ENCODE measurements at regions of chr7 and their contacts with region 1.

Region 1: DNA sequence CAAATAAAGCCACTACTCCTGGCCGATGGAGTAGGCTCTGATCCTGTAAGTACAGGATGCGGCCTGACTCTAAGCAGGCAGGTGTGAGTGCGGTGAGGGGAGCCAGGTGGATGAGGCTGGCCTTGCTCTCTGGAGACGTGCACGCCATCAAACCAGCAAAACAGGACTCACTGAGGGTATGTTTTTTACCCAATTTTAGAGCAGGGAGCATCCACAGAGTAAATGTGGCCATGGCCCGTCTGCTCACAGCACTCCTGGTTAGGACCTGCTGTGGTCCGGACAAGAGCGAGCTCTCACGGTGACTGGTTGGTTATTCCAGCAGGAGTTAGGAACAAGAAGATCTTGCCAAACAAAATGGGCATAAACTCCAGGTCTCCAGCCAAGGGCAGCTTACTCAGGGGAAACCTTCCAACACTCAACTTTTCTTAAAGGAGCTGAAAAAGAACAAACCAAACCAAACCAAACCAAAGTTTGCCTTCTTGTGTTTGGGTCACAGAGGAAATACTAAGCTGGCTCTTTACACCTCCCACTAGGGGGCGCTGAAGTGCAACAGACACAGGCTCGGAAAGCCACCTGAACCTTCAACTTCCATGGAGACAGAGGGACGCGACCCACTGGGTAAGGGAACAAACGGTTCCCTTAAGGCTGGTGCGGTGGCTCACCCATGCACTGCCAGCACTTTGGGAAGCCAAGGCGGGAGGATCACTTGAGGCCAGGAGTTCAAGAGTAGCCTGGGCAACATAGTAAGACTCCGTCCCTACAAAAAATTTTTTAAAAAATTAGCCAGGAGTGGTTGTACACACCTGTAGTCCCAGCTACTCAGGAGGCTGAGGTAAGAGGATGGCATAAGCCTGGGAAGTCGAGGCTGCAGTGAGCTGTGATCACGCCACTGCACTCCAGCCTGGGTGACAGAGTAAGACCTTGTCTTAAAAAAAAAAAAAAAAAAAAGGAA is 122.4 kb downstream of the CLEC2L start:
- DNase-seq: peak; percentile 85
- H3K4me3 ChIP-seq: no peak overlapping the region; a peak in 1 of 4 replicates
- H3K27ac ChIP-seq: no peak overlapping the region
- H3K4me1 ChIP-seq: peaks cover 0 to 5% of the 10 kb centered on the region in 2 experiments; a peak in 1 of 4 replicates
- H3K27me3 ChIP-seq: no peaks in the 10 kb centered on the region
- CTCF ChIP-seq: peak; percentile 99
- EP300 ChIP-seq: no peak
- RAD21 ChIP-seq: peak; percentile 100

Region 2: GRCh38 chr7:139570119-139570518 is 75.7 kb before region 1 on chr7:
- CTCF ChIA-PET with region 1: no interaction called
- POLR2A ChIA-PET with region 1: no interaction called
- DNase-seq: peak; percentile 66
- H3K4me3 ChIP-seq: no peak overlapping the region
- H3K27ac ChIP-seq: no peak overlapping the region
- H3K4me1 ChIP-seq: no peaks in the 10 kb centered on the region
- H3K27me3 ChIP-seq: no peaks in the 10 kb centered on the region
- CTCF ChIP-seq: no peak
- EP300 ChIP-seq: no peak
- RAD21 ChIP-seq: peak; percentile 46

Region 3: GRCh38 chr7:139602143-139602722 is 43.6 kb before region 1 on chr7:
- CTCF ChIA-PET with region 1: interaction called, 22 read pairs
- POLR2A ChIA-PET with region 1: interaction called, 3 read pairs
- DNase-seq: peak; percentile 65
- H3K4me3 ChIP-seq: no peak overlapping the region
- H3K27ac ChIP-seq: no peak overlapping the region
- H3K4me1 ChIP-seq: peaks cover 0 to 18% of the 10 kb centered on the region in 2 experiments; a peak in 1 of 4 replicates
- H3K27me3 ChIP-seq: no peaks in the 10 kb centered on the region
- CTCF ChIP-seq: peak; percentile 86
- EP300 ChIP-seq: no peak
- RAD21 ChIP-seq: peak; percentile 76

Region 4: DNA sequence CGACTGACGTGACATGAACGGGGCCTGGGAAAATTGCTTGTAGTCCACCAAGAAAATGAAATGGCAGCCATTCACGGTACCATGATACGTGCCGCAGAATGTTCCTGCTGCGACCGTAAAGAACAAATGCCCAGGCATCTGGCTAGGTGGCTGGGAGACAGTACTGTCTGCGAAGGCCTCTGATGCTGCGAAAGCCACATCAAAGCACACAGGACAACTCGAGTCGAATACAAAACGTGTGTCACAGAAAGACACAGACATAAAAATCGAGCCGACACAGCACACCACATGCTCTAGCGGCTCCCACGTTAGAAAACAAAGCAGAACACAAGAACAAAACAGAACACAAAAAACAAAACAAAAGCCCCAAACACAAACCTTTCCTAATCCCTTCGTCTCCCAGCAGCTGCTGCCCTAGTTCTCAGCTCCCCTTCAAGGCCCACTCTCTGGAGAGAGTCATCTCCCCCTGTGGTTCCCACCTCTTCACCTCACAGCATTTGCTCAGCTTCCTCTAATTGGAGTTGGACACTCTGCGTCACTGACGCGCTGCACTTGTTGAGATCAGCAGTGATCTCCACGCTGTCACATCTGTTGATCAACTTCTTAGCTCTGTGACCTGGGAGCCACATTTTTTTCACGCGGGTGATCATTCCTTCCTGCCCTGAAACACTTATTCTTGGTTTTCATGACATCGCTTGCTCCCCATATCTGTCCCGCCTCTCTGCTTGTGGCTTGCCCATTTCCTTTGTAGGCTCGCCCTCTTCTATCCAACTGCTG is 10.1 kb before region 1 on chr7:
- CTCF ChIA-PET with region 1: interaction called, 38 read pairs
- POLR2A ChIA-PET with region 1: no interaction called
- DNase-seq: no peak
- H3K4me3 ChIP-seq: no peak overlapping the region
- H3K27ac ChIP-seq: no peak overlapping the region
- H3K4me1 ChIP-seq: no peaks in the 10 kb centered on the region
- H3K27me3 ChIP-seq: no peaks in the 10 kb centered on the region
- CTCF ChIP-seq: no peak
- EP300 ChIP-seq: no peak
- RAD21 ChIP-seq: no peak

Region 5: DNA sequence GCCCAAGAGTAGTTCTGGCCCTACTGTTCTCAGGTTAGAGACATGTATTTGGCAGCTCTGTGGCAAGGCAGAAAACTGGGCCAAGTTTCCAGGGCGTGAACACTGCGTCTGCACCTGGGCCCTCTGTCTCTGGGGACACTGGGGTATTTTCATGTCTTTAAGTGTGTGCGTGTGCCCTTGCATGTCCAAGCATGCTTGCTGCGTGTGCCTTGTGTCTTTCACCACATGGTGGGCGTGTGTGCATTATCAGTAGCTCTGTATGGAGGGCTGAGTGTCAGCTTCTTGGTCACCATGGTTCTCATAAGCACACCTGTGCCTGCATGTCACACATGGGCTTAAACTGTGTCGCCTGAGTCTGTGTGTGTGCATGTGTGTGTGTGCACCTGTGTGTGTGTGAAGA is 62.7 kb after region 1 on chr7:
- CTCF ChIA-PET with region 1: interaction called, 17 read pairs
- POLR2A ChIA-PET with region 1: no interaction called
- DNase-seq: no peak
- H3K4me3 ChIP-seq: no peak overlapping the region
- H3K27ac ChIP-seq: no peak overlapping the region
- H3K4me1 ChIP-seq: peaks cover 6 to 16% of the 10 kb centered on the region in 2 experiments; a peak in 3 of 4 replicates
- H3K27me3 ChIP-seq: no peaks in the 10 kb centered on the region
- CTCF ChIP-seq: no peak
- EP300 ChIP-seq: no peak
- RAD21 ChIP-seq: no peak

Region 6: DNA sequence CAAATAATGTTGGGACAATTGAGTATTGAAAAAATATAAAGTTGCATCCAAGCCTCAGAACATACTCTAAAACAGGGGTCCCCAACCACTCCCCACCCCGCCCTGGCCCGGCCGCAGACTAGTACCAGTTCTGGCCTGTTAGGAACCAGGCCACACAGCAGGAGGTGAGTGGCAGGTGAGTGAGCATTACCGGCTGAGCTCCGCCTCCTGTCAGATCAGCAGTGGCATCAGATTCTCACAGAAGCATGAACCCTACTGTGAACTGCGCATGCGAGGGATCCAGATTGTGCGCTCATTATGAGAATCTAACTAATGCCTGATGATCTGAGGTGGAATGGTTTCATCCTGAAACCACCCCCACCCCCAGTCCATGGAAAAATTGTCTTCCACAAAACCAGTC is 112.5 kb after region 1 on chr7:
- CTCF ChIA-PET with region 1: interaction called, 10 read pairs
- POLR2A ChIA-PET with region 1: no interaction called
- DNase-seq: no peak
- H3K4me3 ChIP-seq: no peak overlapping the region
- H3K27ac ChIP-seq: no peak overlapping the region
- H3K4me1 ChIP-seq: peaks cover 10 to 21% of the 10 kb centered on the region in 2 experiments; a peak in 2 of 4 replicates
- H3K27me3 ChIP-seq: no peaks in the 10 kb centered on the region
- CTCF ChIP-seq: no peak
- EP300 ChIP-seq: no peak
- RAD21 ChIP-seq: no peak

Region 7: GRCh38 chr7:139804571-139804970 is 158.7 kb after region 1 on chr7:
- CTCF ChIA-PET with region 1: no interaction called
- POLR2A ChIA-PET with region 1: no interaction called
- DNase-seq: no peak
- H3K4me3 ChIP-seq: no peak overlapping the region
- H3K27ac ChIP-seq: no peak overlapping the region
- H3K4me1 ChIP-seq: no peaks in the 10 kb centered on the region
- H3K27me3 ChIP-seq: no peaks in the 10 kb centered on the region
- CTCF ChIP-seq: no peak
- EP300 ChIP-seq: no peak
- RAD21 ChIP-seq: no peak

Region 8: GRCh38 chr7:139953229-139953628 is 307.4 kb after region 1 on chr7:
- CTCF ChIA-PET with region 1: interaction called, 13 read pairs
- POLR2A ChIA-PET with region 1: no interaction called
- DNase-seq: peak; percentile 42
- H3K4me3 ChIP-seq: no peak overlapping the region
- H3K27ac ChIP-seq: no peak overlapping the region
- H3K4me1 ChIP-seq: peaks cover 0 to 12% of the 10 kb centered on the region in 2 experiments; a peak in 2 of 4 replicates
- H3K27me3 ChIP-seq: no peaks in the 10 kb centered on the region
- CTCF ChIP-seq: no peak
- EP300 ChIP-seq: no peak
- RAD21 ChIP-seq: no peak

Region 9: DNA sequence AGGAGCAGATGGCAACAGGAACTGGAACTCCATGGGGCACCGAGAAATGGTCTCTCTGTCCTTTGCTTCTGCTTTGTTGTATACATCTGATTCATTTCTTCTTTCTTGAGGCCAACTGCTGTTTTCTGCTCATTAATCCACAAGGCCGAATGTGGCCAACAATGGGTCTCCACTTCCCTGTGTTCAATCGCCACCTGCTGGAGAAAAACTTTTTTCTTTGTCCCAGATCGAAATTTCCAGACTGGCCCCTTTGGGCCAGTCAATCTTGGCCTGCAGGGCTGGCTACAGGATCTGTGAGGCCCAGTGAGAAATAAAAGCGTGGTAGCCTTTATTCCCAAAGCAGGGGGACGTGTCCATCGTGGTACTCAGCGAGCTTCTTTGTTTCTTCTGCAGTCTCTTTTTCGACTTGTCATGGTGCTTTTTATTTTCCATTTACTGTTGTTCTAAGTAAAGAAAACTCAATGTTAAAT is 358.1 kb after region 1 on chr7:
- CTCF ChIA-PET with region 1: interaction called, 229 read pairs
- POLR2A ChIA-PET with region 1: no interaction called
- DNase-seq: peak; percentile 67
- H3K4me3 ChIP-seq: no peak overlapping the region
- H3K27ac ChIP-seq: no peak overlapping the region
- H3K4me1 ChIP-seq: peaks cover 0 to 5% of the 10 kb centered on the region in 2 experiments; a peak in 1 of 4 replicates
- H3K27me3 ChIP-seq: no peaks in the 10 kb centered on the region
- CTCF ChIP-seq: peak; percentile 73
- EP300 ChIP-seq: no peak
- RAD21 ChIP-seq: peak; percentile 71